Activated CD4-positive, alpha-beta T cell treated with anti-CD3 and anti-CD28 coated beads for 36 hours (primary cell): ENCODE measurements at regions of chr11 and their contacts with region 1.

Region 1: DNA sequence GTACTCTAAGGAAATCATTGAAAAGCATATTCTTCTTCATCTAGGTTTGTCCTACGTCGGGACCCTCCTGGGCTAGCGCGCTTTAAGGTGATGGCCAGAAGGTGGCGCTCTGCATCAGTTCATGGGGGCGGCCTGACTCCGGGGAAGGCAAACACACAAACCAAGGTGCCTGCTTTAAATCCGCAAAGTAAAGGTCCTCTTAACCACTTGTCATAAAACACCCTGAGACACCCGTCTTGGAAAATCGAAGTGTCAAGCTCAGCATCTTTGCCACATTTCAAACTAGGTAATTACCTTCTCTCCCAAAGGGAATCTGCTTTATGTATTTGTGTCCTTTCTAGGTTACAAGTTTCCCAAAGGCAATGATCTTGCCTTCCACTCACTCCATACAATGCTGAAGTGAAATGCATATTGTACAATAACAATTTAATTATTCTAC is 33.9 kb downstream of the LMO2 start:
- DNase-seq: peak; percentile 88
- ATAC-seq: peak; percentile 88
- H3K4me3 Mint-ChIP-seq: no peak overlapping the region
- H3K27ac Mint-ChIP-seq: no peak overlapping the region
- H3K4me1 Mint-ChIP-seq: no peaks in the 10 kb centered on the region
- H3K27me3 Mint-ChIP-seq: peaks cover 32% of the 10 kb centered on the region

Region 2: GRCh38 chr11:33808228-33808828 is 49.6 kb before region 1 on chr11:
- CTCF ChIA-PET with region 1: interaction called, 5 read pairs
- POLR2A ChIA-PET with region 1: no interaction called
- intact Hi-C with region 1: loop called in 1 of 2 experiments (anchors 2 kb)
- DNase-seq: peak; percentile 91
- ATAC-seq: peak; percentile 90
- H3K4me3 Mint-ChIP-seq: no peak overlapping the region
- H3K27ac Mint-ChIP-seq: no peak overlapping the region
- H3K4me1 Mint-ChIP-seq: no peaks in the 10 kb centered on the region
- H3K27me3 Mint-ChIP-seq: peaks cover 6% of the 10 kb centered on the region

Region 3: DNA sequence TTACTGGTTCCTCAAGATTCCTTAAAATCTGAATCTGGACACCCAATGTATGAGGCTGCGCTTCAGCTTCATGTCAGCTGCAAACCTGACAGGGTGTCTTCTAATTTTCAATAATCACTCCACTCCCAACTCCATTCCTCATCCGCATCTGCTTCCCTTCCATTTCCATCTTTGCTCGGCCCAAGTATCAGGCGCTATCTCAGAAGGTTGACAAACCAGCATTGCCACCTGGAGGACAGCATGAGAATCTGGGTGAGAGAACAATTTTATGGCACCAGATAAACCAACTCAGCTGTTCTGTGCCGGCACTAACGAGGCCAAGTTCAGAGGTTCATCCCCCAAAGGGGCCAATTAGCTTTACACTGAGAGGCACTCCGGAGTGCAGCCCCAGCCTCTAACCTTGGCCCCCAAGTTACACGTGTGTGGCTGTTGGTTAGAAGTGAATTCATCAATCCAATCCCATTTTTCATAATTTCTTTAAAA is 113.1 kb after region 1 on chr11:
- CTCF ChIA-PET with region 1: interaction called, 37 read pairs
- POLR2A ChIA-PET with region 1: no interaction called
- intact Hi-C with region 1: loop called (anchors 1 kb)
- DNase-seq: peak; percentile 40
- ATAC-seq: peak; percentile 44
- H3K4me3 Mint-ChIP-seq: no peak overlapping the region
- H3K27ac Mint-ChIP-seq: no peak overlapping the region
- H3K4me1 Mint-ChIP-seq: no peaks in the 10 kb centered on the region
- H3K27me3 Mint-ChIP-seq: peaks cover 9% of the 10 kb centered on the region

Region 4: GRCh38 chr11:33976495-33977199 is 118.7 kb after region 1 on chr11:
- CTCF ChIA-PET with region 1: interaction called, 37 read pairs
- POLR2A ChIA-PET with region 1: no interaction called
- intact Hi-C with region 1: loop called in 1 of 2 experiments (anchors 1 kb)
- DNase-seq: no peak
- ATAC-seq: no peak
- H3K4me3 Mint-ChIP-seq: no peak overlapping the region
- H3K27ac Mint-ChIP-seq: no peak overlapping the region
- H3K4me1 Mint-ChIP-seq: no peaks in the 10 kb centered on the region
- H3K27me3 Mint-ChIP-seq: peaks cover 11% of the 10 kb centered on the region

Region 5: GRCh38 chr11:34382532-34383276 is 524.8 kb after region 1 on chr11:
- CTCF ChIA-PET with region 1: no interaction called
- POLR2A ChIA-PET with region 1: no interaction called
- intact Hi-C with region 1: no loop called
- DNase-seq: no peak
- ATAC-seq: no peak
- H3K4me3 Mint-ChIP-seq: no peak overlapping the region
- H3K27ac Mint-ChIP-seq: no peak overlapping the region
- H3K4me1 Mint-ChIP-seq: peaks cover 3% of the 10 kb centered on the region
- H3K27me3 Mint-ChIP-seq: peaks cover 7% of the 10 kb centered on the region